Heart right ventricle (tissue), 16 donors: ENCODE measurements at regions of chrX and their contacts with region 1.

Region 1: DNA sequence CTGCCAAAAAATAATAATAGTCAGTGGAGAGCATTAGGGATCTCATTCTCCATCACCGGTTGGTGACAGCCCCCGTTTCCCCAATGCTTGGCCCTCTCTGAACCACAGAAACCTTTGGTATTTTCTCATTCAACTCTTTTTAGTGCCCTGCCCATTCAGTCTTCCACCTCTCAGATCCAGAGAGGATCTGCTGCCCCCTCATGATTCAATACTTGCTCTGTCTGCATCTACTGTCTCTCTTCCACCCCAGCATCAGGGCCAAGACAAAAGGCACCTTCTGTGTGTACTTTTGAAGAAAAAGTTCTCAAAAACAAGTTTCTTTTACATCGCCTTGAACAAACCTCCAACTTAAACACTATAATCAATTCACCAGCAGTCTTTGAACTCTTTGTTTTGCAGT is 19.3 kb downstream of the CLTRN start:
- DNase-seq: no peak
- ATAC-seq: no peak
- H3K4me3 ChIP-seq: no peak overlapping the region
- H3K27ac ChIP-seq: no peak overlapping the region
- H3K4me1 ChIP-seq: no peaks in the 10 kb centered on the region
- H3K27me3 ChIP-seq: peaks cover 0 to 73% (median 0%) of the 10 kb centered on the region in 7 donors
- CTCF ChIP-seq: no peak

Region 2: GRCh38 chrX:15594371-15594770 is 50.9 kb before region 1 on chrX:
- intact Hi-C with region 1: loop called in 4 of 10 experiments (anchors 5 to 10 kb)
- DNase-seq: no peak
- ATAC-seq: peak in 2 of 8 donors; percentile 57 to 58
- H3K4me3 ChIP-seq: no peak overlapping the region
- H3K27ac ChIP-seq: peak overlapping the region in 1 of 10 donors; percentile 36
- H3K4me1 ChIP-seq: no peaks in the 10 kb centered on the region
- H3K27me3 ChIP-seq: peaks cover 0 to 92% (median 0%) of the 10 kb centered on the region in 7 donors
- CTCF ChIP-seq: peak in 5 of 9 donors; percentile 25 to 41 (median 32)